ENCODE measurements at regions of chr10 and their contacts with region 1.

Region 1: DNA sequence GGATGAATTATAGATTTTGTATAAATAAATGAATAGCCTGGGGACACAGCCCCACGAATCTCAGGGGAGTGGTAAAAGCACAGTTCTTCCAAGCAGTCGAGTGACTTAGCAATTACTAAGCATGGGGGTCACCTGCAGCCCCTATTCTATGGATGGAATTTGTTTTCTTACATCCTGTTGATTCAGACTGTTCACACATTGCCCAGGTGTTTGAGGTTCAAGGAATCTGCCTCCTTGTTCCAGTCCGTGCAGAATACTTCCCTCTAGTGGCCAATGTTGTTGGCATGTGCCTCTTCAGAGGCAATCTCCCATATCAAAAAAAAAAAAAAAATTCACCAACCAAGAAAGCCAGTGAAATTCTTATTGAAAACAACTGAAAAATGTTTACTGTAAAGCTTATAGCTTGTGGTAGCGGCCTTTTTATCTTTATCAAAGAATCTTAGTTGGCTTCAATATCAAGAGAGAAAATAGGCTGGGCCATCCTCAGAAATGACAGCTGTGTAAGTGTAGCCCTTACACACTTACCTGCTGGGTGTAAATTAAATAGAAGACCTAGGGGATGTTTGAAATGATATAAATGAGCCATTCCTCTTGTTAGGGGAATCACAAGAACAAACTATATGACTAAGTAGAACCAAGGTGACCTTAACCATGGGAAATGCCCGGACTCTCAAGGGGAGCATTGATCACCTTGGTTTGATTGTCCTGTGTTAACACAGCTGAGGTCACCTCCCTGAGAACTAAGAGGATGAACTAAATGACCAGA is 7.8 kb downstream of the LIPM start:
- ATAC-seq: peak in 7 of 8 experiments; percentile 26 to 93 (median 64)
- H3K4me3 ChIP-seq: no peak overlapping the region
- H3K27ac ChIP-seq: no peak overlapping the region
- H3K4me1 ChIP-seq: peaks cover 0 to 11% of the 10 kb centered on the region in 2 donors

Region 2: DNA sequence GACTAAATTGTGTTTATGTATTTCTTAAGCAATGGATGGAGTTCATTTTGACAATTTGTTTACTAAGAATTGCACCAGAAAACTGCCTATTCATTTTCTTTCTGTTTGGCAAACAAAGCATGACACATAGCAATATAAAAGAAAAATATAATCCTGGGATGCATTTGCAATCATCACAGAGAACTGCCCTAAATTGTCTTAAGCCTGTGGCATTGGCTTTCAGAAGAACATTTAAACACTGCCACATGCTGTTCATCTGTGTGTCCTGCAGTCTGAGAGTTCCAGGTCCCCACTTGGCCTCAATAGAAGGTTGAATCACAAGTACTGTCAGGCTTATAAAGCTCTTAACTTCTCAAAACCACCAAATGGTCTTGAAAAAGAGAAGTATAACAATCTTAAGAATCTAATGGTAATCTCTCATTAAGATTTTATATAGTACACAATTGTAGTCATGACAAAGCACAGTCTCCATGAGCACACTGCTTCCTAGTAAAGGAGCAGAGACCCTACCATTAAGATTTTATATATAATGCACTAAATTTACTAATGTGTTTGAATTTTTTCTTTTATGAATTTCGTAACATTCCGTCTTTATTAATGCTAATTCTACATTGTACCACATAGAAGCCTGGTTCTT is 257.1 kb before region 1 on chr10:
- in situ Hi-C with region 1: loop called in 1 of 9 experiments (anchors 25 kb)
- ATAC-seq: peak; percentile 77 to 98 (median 90)
- H3K4me3 ChIP-seq: no peak overlapping the region
- H3K27ac ChIP-seq: no peak overlapping the region
- H3K4me1 ChIP-seq: no peaks in the 10 kb centered on the region

Region 3: GRCh38 chr10:88687853-88688467 is 122.4 kb before region 1 on chr10:
- in situ Hi-C with region 1: loop called in 2 of 9 experiments (anchors 10 to 25 kb)
- ATAC-seq: no peak
- H3K4me3 ChIP-seq: no peak overlapping the region
- H3K27ac ChIP-seq: no peak overlapping the region
- H3K4me1 ChIP-seq: no peaks in the 10 kb centered on the region

Region 4: DNA sequence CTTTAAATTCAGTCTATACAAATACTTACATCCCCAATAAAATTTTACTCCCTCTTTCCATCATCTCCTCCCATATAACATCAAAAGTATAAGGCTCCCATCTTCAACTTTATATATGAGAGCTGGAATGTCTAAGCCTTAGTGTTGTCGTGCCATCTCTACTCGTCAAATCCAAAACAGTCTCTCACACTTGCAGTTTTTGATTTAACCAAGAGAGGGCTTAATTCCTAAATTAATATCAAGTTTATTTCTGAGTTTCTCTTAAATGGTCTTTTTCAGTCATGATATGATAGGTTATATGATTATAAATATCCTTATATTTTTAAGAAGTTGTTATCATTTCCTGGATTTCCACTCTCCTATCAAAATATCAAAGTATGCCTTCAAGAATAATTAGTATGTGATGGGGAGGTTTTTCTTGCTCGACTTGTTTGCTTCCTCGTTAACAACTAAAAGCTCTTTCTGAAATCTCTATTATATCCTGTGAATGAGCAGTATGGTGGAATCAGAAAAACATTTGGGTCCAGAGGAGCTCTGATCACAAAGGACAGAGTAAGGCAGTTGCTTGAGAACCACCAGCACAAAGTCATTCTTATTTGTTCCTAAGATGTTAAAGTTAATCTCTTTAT is 116.9 kb before region 1 on chr10:
- in situ Hi-C with region 1: loop called in 2 of 9 experiments (anchors 10 to 25 kb)
- ATAC-seq: no peak
- H3K4me3 ChIP-seq: no peak overlapping the region
- H3K27ac ChIP-seq: no peak overlapping the region
- H3K4me1 ChIP-seq: no peaks in the 10 kb centered on the region

Region 5: DNA sequence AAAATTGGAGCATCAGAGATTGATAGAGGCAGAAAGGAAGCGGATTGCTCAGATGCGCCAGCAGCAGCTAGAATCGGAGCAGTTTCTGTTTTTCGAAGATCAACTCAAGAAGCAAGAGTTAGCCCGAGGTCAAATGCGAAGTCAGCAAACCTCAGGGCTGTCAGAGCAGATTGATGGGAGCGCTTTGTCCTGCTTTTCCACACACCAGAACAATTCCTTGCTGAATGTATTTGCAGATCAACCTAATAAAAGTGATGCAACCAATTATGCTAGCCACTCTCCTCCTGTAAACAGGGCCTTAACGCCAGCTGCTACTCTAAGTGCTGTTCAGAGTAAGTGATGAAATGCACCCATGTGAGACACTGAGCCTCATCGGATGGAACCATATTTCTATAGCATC is 102.7 kb after region 1 on chr10:
- in situ Hi-C with region 1: no loop called
- ATAC-seq: peak in 7 of 8 experiments; percentile 29 to 99 (median 98)
- H3K4me3 ChIP-seq: peak overlapping the region in 1 of 5 donors; percentile 0
- H3K27ac ChIP-seq: peak overlapping the region; percentile 31
- H3K4me1 ChIP-seq: peaks cover 10 to 21% of the 10 kb centered on the region in 2 donors